ENCODE measurements at regions of chr22 and their contacts with region 1.

Region 1: DNA sequence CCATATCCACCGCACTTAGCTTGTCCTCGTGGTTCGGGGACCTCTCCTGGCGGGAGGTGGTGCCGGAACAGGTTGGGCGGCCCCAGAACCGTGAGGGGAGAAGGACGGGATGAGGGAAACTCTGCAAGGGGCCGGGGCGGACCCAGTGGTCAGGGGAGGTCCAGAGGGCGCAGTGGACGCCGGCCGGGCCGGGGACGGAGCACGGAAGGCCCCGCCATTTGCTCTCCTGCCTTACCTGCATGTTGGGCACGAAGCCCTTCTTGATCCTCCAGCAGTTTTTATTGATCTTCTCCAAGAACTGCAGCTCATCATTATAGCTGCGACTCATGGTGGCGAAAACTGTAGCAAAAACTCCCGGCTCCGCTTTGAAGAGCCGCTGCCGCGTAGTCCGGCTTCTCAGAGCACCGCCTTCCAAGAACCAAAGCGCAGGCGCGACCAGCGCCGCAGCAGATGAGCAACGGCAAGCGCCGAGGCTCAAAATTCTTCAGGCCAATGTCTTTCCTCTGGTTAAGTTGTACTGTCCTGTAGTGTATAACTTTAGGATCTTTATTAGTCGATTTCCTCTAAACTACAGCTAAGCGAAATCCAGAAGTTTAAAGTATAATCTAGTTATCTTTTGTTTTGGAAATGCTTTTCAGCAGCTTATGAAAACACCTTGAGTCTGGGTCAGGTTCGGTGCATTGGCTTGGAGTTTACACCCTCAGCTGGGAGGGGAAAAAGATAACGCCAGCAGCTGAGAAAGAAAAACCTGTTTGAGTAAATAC is at the start of gene RTCB:
- H3K4me3 ChIP-seq: peak within 1 kb of the TSS; percentile 89
- H3K27ac ChIP-seq: peak within 1 kb of the TSS; percentile 40; the same call in 1 of the 2 replicates
- H3K4me1 ChIP-seq: no peaks in the 10 kb centered on the region; the same call in 1 of the 2 replicates
- CTCF ChIP-seq: peak; percentile 16; the same call in 1 of the 2 replicates

Region 2: DNA sequence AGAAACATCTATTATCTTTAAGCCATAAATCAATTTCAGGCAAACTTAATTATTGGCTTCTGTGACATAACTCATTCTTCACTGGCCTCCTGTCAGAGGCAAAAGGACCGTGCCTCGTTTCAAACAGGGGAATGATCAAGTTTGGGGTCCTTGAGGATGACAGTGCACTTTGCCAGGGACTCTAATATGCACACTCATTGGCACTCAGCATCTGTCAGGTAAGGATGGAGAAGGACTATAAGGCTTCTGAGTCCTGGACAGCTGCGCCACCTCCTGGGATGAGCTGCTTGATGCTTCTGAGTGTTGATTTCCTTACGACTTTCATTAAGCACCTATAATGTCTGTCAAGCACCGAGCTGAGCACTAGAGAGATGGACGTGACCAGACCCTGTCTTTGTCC is 32.1 kb after region 1 on chr22:
- CTCF ChIA-PET with region 1: interaction called, 19 read pairs
- POLR2A ChIA-PET with region 1: no interaction called
- H3K4me3 ChIP-seq: no peak overlapping the region
- H3K27ac ChIP-seq: no peak overlapping the region
- H3K4me1 ChIP-seq: no peaks in the 10 kb centered on the region
- CTCF ChIP-seq: no peak

Region 3: GRCh38 chr22:32474635-32475467 is 62.8 kb after region 1 on chr22 and contains the start of gene FBXO7:
- CTCF ChIA-PET with region 1: interaction called, 14 read pairs
- POLR2A ChIA-PET with region 1: interaction called, 12 read pairs
- H3K4me3 ChIP-seq: peak within 1 kb of the TSS; percentile 99
- H3K27ac ChIP-seq: peak within 1 kb of the TSS; percentile 99
- H3K4me1 ChIP-seq: peaks cover 7% of the 10 kb centered on the region
- CTCF ChIP-seq: peak; percentile 80

Measured in HEK293 (cell line).